A673 (cell line): ENCODE measurements at regions of chr13 and their contacts with region 1.

Region 1: GRCh38 chr13:45678282-45678681 is 23.8 kb upstream of the CBY2 start:
- DNase-seq: peak; percentile 73
- H3K4me3 ChIP-seq: no peak overlapping the region
- H3K27ac ChIP-seq: peak overlapping the region; percentile 72
- H3K4me1 ChIP-seq: peaks cover 27% of the 10 kb centered on the region
- H3K27me3 ChIP-seq: no peaks in the 10 kb centered on the region
- CTCF ChIP-seq: no peak

Region 2: DNA sequence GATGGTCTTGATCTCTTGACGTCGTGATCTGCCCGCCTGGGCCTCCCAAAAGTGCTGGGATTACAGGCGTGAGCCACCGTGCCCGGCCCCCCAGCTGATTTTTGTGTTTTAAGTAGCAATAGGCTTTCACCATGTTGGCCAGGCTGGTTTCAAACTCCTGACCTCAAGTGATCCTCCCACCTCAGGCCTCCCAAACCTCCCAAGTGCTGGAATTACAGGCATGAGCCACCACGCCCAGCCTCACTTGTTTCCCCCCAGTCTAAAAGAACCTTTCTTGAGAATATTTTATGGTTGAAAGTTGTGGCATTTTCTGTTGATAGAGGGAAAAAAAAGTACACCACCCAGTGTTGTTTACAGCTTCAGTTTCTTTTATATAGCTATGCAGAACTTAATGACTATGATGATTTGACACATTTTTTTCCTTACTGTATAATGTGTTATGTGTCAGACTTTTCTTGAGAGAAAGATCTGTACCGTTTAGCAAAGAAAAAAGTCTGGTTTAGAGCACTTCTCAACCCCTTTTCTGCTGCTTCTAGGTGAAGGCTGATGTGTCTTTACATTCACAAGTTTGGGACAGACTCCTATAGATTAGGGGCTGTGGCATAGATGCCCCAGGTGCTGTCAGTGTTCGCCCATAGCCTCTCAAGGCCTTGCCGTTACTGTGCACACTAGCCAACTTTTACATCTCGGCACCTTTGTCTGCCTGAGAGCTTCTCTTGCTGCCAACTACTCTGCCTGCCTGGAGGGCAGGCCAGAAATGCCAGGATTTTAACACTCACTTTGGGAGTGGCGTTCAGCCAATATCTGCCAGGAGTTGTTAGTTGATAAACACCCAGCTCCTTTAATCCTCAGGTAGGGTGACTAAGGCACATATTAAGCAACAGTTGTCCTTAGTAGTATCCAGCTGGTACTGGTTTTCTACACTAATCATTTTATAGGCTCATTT is 510.4 kb before region 1 on chr13:
- CTCF ChIA-PET with region 1: no interaction called
- POLR2A ChIA-PET with region 1: interaction called, 13 read pairs
- intact Hi-C with region 1: no loop called
- DNase-seq: no peak
- H3K4me3 ChIP-seq: no peak overlapping the region
- H3K27ac ChIP-seq: no peak overlapping the region
- H3K4me1 ChIP-seq: no peaks in the 10 kb centered on the region
- H3K27me3 ChIP-seq: no peaks in the 10 kb centered on the region
- CTCF ChIP-seq: no peak

Region 3: DNA sequence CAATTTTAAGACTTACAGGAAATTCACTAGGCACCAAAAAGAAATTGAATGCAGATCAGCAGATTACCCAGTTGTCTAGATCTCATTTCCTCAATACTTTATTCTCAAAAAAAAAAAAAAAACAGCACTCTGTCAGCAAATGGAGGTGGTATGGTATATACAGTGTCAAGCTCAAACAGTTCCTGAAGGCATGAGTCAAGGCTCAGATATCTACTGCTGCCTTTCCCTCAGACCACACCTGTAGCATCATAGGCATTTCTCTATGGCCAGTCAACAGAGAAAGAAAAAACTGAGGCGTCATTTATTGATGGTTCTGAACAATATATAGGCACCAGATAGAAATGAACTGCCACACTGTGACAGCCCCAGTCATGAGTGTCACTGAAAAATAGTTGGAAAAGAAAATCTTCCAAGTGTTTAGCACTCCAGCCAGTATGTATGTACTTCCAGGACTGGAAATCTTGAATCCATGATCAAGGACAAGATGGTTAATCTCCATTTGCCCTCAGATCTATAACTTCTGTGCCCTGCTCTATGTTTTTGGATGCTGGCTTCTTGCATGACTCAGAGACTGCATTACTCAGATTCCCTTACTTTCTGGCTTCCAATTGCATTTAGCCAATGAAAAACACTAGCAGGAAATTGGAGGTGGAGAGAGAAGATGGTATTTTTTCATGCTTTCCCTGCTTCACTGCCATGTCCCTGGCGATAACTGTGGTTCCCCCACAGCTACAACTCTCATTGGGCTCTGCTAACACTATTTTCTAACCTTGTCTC is 221.9 kb before region 1 on chr13:
- CTCF ChIA-PET with region 1: no interaction called
- POLR2A ChIA-PET with region 1: no interaction called
- intact Hi-C with region 1: no loop called
- DNase-seq: no peak
- H3K4me3 ChIP-seq: no peak overlapping the region
- H3K27ac ChIP-seq: no peak overlapping the region
- H3K4me1 ChIP-seq: no peaks in the 10 kb centered on the region
- H3K27me3 ChIP-seq: no peaks in the 10 kb centered on the region
- CTCF ChIP-seq: no peak